OCI-LY7 (cell line): ENCODE measurements at regions of chr10 and their contacts with region 1.

Region 1: DNA sequence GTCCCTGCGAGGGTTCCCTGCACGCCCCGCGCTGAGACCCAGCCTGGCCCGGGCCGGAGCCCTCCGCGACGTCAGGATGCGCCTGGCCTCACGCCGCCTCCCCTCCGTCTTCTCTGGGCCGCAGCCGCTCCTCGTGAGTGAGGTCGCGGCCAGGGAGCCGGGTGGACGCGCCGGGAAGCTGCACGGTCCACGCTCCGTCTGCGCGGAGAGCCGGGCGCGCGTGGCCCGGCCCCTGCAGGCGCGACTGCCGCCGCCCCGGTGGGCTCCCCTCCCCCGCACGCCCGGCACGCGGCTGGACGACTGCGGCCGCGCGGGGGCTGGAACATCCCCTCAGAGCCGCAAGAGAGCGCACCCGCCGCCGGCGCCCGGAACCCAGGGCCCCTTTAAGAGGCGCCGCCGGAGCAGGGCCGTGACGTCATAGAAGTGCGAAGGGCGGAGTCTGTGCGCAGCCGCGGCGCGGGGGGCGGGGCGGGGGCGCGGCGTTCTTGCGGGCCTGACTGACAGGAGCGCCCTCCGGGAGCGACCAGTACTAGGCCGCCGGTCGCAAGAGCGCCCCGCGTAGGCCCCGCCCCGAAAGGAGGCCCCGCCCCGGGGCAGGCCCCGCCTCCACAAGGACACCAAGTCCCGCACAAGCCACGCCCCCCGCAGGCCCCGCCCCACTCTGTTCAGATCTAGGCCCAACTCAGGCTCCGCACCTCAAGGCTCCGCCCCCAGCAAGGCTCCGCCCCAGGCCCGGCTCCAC is 445 bp upstream of the INPP5A start:
- DNase-seq: peak; percentile 98
- H3K4me3 ChIP-seq: peak overlapping the region; percentile 75
- H3K27ac ChIP-seq: no peak overlapping the region
- H3K4me1 ChIP-seq: peaks cover 45% of the 10 kb centered on the region
- CTCF ChIP-seq: peak; percentile 47

Region 2: GRCh38 chr10:132387764-132388210 is 149.4 kb before region 1 on chr10:
- CTCF ChIA-PET with region 1: no interaction called
- POLR2A ChIA-PET with region 1: no interaction called
- intact Hi-C with region 1: loop called (anchors 10 kb)
- DNase-seq: peak; percentile 81
- H3K4me3 ChIP-seq: peak overlapping the region; percentile 22
- H3K27ac ChIP-seq: no peak overlapping the region
- H3K4me1 ChIP-seq: peaks cover 5% of the 10 kb centered on the region
- CTCF ChIP-seq: peak; percentile 65

Region 3: GRCh38 chr10:132458593-132459300 is 78.4 kb before region 1 on chr10:
- CTCF ChIA-PET with region 1: no interaction called
- POLR2A ChIA-PET with region 1: no interaction called
- intact Hi-C with region 1: loop called (anchors 5 kb)
- DNase-seq: peak; percentile 54
- H3K4me3 ChIP-seq: no peak overlapping the region
- H3K27ac ChIP-seq: no peak overlapping the region
- H3K4me1 ChIP-seq: no peaks in the 10 kb centered on the region
- CTCF ChIP-seq: peak; percentile 95

Region 4: DNA sequence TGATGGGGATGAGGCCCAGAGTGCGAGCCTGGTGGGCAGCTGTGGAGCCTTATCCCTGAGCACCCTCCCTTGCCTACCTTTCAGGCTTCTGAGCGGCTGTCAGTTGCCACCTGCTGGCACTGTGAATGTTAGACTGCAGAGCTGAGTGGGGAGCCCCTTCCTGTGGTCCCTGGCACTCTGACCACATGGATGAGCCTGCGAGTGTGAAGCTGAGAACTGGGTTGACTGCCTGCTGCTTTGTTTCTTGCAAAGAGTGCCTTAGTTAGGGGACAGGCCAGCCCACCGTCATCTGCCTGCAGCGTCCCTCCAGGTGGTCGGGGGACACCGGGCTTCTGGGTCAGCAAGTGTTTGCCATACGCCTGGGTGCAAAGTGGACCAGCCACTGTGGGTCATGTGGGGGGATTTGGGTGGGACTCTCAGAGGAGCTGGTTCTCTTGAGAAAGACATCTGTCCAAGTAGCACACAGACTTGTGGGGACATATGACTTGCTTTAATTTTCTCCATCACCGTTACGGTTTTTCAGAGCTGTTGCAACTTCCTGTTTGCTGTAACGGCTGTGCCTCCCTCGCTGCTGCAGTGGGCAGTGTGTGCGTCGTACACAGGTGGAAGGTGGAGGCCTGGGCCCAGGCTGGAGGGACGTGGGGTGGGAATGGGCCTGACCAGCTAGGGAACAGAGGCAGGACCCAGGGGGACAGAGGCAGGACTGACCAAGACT is 14.1 kb after region 1 on chr10:
- CTCF ChIA-PET with region 1: interaction called, 3 read pairs
- POLR2A ChIA-PET with region 1: interaction called, 20 read pairs
- intact Hi-C with region 1: loop called (anchors 1 kb)
- DNase-seq: peak; percentile 84
- H3K4me3 ChIP-seq: peak overlapping the region; percentile 38
- H3K27ac ChIP-seq: peak overlapping the region; percentile 86
- H3K4me1 ChIP-seq: peaks cover 62% of the 10 kb centered on the region
- CTCF ChIP-seq: peak; percentile 51; the same call in 1 of the 2 replicates

Region 5: DNA sequence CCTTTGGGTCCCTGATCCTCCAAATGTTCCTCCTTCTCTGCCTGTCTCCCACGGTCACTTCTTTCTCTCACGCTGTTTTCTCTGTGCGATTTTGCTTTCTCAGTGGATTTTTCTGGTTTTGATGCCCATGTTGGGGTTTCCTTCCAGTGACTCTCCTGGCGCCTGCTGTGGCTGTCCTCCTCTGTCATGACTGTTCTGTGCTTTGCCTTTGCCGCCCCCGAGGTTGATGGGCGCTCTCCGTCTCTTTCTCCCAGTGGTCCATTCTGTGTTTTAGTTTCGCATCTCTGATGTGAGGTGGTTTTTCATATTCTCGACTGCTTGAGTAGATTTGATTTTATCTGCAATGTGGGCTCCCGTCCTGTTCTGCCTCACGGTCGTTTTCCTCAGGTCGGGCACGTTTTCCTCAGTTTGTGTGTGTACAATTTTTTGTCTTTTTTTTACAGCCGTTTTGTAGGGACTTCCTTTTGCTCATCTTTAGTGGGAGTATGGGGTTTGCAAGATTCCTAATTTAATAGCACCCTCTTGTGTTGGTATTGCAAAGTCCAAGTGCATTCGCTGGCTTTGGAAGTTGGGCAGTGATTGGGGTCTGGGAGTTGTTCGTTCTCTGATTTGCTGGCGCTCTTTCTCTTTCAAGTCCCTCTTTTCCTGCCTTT is 100.5 kb after region 1 on chr10:
- CTCF ChIA-PET with region 1: no interaction called
- POLR2A ChIA-PET with region 1: no interaction called
- intact Hi-C with region 1: loop called (anchors 2 kb)
- DNase-seq: peak; percentile 69
- H3K4me3 ChIP-seq: no peak overlapping the region
- H3K27ac ChIP-seq: no peak overlapping the region
- H3K4me1 ChIP-seq: no peaks in the 10 kb centered on the region
- CTCF ChIP-seq: peak; percentile 91